ENCODE measurements at regions of chr19 and their contacts with region 1.

Region 1: GRCh38 chr19:2962045-2962561 is 15.3 kb upstream of the TLE6 start:
- DNase-seq: peak; percentile 72
- CTCF ChIP-seq: peak; percentile 60

Region 2: GRCh38 chr19:2977001-2977685 is 15.0 kb after region 1 on chr19 and contains the start of gene TLE6:
- CTCF ChIA-PET with region 1: interaction called, 13 read pairs
- POLR2A ChIA-PET with region 1: interaction called, 3 read pairs
- DNase-seq: peak; percentile 100
- CTCF ChIP-seq: no peak

Region 3: DNA sequence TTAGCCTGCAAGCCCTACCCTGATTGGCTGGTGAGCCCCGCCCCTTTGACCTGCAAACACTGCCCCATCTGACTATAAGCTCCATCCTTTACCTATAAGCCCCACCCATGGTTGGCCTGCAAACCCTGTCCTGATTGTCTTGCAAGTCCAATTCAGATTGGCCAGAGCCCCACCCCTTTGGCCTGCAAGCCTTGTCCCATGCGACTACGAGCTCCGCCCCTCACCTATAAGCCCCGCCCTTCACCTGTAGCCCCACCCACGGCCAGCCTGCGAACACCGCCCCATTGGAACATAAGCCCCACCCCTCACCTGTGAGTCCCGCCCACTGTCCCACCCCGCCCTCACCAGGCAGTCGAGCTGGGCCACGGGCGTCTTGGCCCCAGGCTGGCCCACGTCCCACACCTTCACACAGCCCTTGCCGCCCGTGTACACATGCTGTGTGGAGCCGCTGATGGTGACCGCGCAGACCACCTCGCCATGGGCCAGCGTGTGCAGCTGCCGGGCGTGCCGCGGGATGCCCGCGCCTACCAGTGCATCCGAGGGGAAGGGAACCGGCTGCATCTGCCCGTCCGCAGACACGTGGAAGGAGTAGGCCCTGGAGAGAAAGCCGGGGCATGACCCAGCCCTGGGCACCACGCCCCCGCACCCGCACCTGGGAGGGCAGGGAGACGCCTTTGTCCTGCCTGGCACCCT is 44.1 kb after region 1 on chr19:
- CTCF ChIA-PET with region 1: interaction called, 10 read pairs
- POLR2A ChIA-PET with region 1: no interaction called
- DNase-seq: no peak
- CTCF ChIP-seq: no peak

Region 4: DNA sequence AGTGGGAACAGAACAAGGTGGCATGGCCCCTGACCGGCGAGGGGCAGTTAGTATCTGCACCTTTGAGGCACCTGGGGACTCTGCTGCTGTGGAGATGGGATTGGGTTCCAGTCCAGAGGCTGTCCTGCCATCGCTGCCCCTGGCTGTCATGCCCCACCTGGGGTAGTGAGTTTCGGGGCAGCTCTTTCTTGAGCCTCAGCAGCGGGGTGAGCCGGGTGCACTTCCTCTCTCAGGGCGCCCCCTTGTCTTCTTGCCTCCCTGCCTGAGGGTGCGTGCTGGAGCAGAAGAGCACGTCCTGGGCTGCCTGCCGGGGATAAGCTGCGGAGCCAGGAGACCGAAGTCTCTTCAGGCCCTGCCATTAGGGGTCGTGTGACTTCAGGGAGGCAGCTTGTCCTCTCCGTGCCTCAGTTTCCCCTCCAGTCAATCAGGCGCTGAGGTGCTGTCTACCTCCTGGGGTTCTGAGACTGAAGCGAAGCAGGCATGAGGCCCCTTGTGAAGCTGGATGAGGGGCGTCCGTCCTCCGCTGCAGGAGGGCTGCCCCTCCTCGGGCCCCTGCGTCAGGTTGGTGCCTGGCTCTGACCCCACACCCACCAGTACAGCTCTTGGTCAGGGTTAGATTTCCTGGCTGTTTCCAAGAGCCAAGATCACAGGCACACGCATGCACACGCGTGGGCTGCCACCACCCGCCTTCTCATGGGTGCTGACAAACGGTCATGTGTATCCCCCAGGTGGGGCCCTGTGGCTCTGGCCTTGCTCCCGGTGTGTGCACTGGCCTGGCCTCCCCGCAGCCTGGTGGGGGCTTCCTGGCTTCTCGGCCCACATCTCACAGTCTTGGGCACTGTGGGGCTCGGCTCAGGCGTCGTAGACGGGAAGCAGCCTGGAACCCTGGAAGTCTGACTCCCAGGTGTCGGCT is 140.4 kb after region 1 on chr19:
- CTCF ChIA-PET with region 1: interaction called, 41 read pairs
- POLR2A ChIA-PET with region 1: no interaction called
- DNase-seq: no peak
- CTCF ChIP-seq: no peak